HEK293T (cell line): ENCODE measurements at regions of chr5 and their contacts with region 1.

Region 1: DNA sequence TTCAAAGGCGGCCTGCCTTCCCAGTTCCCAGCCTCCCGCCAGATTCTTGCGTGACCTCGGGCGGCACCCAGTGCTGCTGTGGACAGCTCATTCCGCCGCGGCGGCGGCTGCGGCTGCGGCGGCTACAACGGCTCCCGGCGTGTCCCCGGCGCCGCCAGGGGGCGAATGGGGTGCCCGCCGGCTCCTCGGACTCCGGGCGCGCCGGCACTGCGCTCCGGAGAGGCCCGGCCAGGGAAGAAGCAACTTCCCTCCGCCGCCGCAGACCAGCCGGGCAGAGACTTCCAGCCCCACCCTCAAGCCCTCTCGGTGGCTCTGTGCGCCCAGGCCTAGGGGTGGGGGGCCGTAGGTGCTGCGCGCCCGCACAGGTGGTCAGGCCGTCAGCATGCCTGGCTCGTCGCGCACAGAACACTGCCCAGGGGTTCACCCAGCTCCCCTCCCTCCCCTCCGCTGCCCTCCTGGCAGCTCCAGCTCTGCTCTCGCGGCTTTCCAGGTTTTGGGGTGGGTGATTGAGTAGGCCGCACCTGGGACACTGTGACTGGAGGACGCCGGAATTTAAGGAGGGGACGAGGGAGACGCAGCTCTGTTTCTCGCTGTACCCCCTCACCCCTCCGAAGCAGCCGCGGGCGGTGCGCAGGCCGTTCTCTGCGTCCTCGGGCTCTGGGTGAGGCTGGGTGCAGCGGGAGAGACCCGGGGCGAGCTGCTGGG is 20.2 kb downstream of the IGIP start:
- DNase-seq: no peak

Region 2: DNA sequence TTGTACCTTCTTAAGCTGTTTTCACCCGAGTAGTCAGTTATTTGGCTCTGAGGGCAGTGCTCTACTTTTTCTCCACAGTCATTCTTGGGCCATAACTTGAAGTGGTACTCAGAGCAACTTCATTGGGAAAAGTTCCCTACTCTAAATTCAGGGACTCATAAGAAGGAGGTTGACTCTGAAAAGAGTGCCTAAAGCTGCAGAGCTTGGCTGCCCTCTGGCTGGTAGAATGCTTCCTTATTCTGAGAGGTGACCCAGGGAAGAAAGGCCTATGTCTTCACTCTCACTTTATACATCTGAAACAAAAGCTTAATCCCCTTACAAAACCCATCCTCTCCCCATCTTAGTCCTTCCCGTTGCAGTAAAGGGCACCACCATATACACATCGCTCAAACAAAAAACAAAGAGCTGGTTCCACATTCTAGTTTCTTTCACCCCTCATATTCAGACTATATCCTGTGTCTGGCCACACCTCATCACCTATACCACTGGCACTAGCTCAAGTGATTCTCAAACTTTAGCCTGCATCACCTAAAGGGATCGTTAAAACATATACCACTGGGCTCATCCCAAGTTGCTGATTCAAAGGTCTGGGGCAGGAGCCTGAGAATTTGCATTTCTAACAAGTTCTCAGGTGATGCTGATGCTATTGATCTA is 12.3 kb before region 1 on chr5:
- CTCF ChIA-PET with region 1: interaction called, 16 read pairs
- POLR2A ChIA-PET with region 1: no interaction called
- DNase-seq: no peak